ENCODE measurements at regions of chr6 and their contacts with region 1.

Region 1: GRCh38 chr6:39280247-39280731 is 33.9 kb downstream of the KCNK17 start:
- DNase-seq: peak; percentile 82 to 95
- H3K4me3 ChIP-seq: peak overlapping the region; percentile 9; the same call in 1 of the 2 replicates
- H3K27ac ChIP-seq: peak overlapping the region; percentile 94
- H3K4me1 ChIP-seq: peaks cover 43% of the 10 kb centered on the region
- H3K27me3 ChIP-seq: no peaks in the 10 kb centered on the region
- CTCF ChIP-seq: no peak

Region 2: GRCh38 chr6:38997128-38997761 is 283.0 kb before region 1 on chr6:
- CTCF ChIA-PET with region 1: interaction called, 11 read pairs
- POLR2A ChIA-PET with region 1: no interaction called
- intact Hi-C with region 1: no loop called
- DNase-seq: no peak
- H3K4me3 ChIP-seq: no peak overlapping the region
- H3K27ac ChIP-seq: no peak overlapping the region
- H3K4me1 ChIP-seq: no peaks in the 10 kb centered on the region
- H3K27me3 ChIP-seq: peaks cover 70% of the 10 kb centered on the region
- CTCF ChIP-seq: peak; percentile 59